ENCODE measurements at regions of chr11 and their contacts with region 1.

Region 1: GRCh38 chr11:62394825-62395538 is 23.9 kb upstream of the SCGB1A1 start:
- DNase-seq: peak; percentile 55 to 61
- ATAC-seq: peak; percentile 92 to 95
- H3K4me3 ChIP-seq: peak overlapping the region; percentile 34 to 50 (median 44)
- H3K27ac ChIP-seq: peak overlapping the region; percentile 32 to 67 (median 48)
- H3K4me1 ChIP-seq: peaks cover 20 to 28% of the 10 kb centered on the region in 2 donors
- H3K27me3 ChIP-seq: no peaks in the 10 kb centered on the region
- CTCF ChIP-seq: peak; percentile 43 to 73 (median 71)
- POLR2A ChIP-seq: no peak

Region 2: DNA sequence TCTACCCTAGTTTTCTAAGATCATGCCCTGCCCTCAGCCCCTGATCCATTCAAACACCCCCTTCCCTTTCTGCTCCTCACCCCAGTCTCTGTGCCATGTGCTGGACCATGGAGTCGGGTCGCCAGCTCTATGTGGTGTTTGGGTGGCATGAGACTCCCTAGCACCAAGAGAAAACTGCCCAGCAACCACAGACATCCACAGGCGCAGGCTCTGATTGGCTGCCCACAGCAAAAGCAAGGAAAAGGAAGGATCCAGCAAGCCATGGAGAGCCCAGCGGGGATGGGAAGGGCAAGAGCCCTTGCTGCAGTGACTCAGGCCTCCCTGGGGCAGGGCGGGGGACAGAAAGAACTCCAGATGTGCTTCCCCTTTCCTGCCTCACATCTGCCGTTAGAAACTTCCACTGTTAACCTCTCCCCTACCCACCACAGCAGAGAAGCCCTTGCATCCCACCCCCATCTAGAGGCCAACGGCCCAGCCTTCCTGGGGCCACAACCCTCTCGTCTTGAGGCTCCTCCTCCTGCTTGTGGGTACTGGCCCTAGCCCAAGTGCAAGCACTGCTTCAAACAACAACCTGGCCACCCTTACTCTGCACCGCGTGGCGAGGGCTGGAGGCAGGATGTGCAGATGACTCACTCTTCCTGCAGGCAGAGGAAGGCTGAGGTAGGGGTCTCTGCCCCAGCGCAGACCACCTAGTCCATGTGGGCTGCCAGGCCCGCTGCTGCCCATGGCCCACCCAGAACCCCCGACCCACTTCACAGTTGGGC is 161.3 kb after region 1 on chr11:
- in situ Hi-C with region 1: loop called in 1 of 4 experiments (anchors 10 kb)
- intact Hi-C with region 1: loop called (anchors 2 kb)
- DNase-seq: peak; percentile 89 to 94
- ATAC-seq: peak; percentile 40 to 42
- H3K4me3 ChIP-seq: peak overlapping the region in 2 of 4 donors; percentile 8 to 23
- H3K27ac ChIP-seq: peak overlapping the region; percentile 97 to 100 (median 100)
- H3K4me1 ChIP-seq: peaks cover 86 to 90% of the 10 kb centered on the region in 2 donors
- H3K27me3 ChIP-seq: no peaks in the 10 kb centered on the region
- CTCF ChIP-seq: no peak
- POLR2A ChIP-seq: peak in 1 of 2 donors; percentile 35

Region 3: GRCh38 chr11:62567018-62567633 is 172.1 kb after region 1 on chr11:
- in situ Hi-C with region 1: no loop called
- intact Hi-C with region 1: no loop called
- DNase-seq: no peak
- ATAC-seq: no peak
- H3K4me3 ChIP-seq: no peak overlapping the region
- H3K27ac ChIP-seq: peak overlapping the region; percentile 21 to 94 (median 75)
- H3K4me1 ChIP-seq: peaks cover 32 to 42% of the 10 kb centered on the region in 2 donors
- H3K27me3 ChIP-seq: no peaks in the 10 kb centered on the region
- CTCF ChIP-seq: no peak
- POLR2A ChIP-seq: no peak

Region 4: DNA sequence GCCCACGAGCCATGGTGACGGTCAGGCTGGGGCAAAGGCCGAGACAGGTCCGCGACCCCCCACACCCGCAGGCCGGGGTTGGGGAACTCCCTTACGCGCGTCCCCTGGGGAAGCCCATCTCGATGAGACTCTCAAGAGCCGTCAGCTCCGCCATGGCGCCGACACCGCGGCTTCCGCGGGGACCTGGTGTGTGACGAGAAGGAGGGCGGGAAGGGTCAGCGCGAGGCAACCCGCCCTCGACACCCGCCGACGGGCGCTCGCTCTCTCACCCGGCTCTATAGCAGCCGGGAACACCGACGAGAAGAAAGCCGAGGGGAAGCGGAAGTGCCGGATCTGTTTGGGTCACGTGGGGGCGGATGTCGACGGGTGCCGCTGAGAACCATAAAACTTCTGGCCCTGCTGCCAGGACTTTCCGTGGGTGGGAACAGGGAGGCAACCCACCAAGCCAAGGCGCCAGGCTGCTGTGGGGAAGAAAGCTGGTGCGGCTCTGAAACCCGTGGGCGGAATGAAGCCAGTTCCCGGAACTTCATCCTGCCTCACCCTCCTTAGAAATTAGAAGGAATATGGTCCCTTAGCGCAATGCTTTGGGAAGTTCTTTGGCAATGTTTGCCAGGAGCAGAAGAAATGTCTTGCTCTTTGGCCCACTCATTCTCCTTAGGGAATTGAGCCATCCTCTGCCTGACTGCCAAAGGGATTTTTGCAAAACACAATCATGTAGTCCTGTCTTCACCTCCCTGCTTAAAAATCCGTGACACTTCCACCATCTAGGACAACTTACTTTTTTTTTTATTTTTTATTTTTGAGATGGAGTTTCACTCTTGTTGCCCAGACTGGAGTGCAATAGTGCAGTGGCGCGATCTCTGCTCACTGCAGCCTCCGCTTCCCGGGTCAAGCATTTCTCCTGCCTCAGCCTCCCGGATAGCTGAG is 284.1 kb after region 1 on chr11 and contains the start of gene UBXN1:
- in situ Hi-C with region 1: loop called in 2 of 4 experiments (anchors 25 kb)
- intact Hi-C with region 1: no loop called
- DNase-seq: peak; percentile 87 to 92
- ATAC-seq: peak; percentile 83 to 85
- H3K4me3 ChIP-seq: peak within 1 kb of the TSS; percentile 91 to 98 (median 93)
- H3K27ac ChIP-seq: peak within 1 kb of the TSS; percentile 88 to 97 (median 94)
- H3K4me1 ChIP-seq: peaks cover 21 to 44% of the 10 kb centered on the region in 2 donors
- H3K27me3 ChIP-seq: no peaks in the 10 kb centered on the region
- CTCF ChIP-seq: no peak
- POLR2A ChIP-seq: peak; percentile 75 to 85
- total RNA-seq, gene UBXN1: 216 to 450 (median 265) TPM

Region 5: DNA sequence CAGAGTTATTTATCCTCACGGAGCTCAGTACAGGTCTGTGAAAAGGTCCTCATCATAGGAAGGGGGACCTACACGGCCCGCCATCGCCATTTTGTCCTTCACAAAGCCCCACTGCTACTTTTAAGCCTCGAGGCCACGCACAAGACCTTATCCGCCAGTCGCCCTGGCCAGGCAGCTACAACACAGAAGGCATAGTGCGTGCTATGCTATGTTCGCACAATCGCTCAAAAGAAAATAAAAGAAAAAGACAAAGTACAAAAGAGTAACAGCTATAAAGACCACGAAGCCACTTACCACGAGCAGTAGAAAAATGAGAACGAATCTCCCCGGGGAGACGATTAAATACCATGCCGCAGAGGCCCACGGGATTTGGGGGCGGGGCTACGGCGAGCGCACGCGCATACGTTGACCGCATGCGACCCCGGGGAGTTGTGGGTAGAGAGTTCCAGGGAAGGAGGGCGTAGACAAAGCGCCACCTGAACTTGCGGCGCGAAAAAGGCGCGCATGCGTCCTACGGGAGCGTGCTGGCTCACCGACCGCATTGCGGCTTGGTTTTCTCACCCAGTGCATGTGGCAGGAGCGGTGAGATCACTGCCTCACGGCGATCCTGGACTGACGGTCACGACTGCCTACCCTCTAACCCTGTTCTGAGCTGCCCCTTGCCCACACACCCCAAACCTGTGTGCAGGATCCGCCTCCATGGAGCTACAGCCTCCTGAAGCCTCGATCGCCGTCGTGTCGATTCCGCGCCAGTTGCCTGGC is 460.8 kb after region 1 on chr11:
- in situ Hi-C with region 1: loop called (anchors 25 kb)
- intact Hi-C with region 1: no loop called
- DNase-seq: peak; percentile 95 to 96
- ATAC-seq: peak; percentile 99
- H3K4me3 ChIP-seq: peak overlapping the region; percentile 70 to 90 (median 80)
- H3K27ac ChIP-seq: peak overlapping the region; percentile 84 to 88 (median 86)
- H3K4me1 ChIP-seq: peaks cover 20 to 21% of the 10 kb centered on the region in 2 donors
- H3K27me3 ChIP-seq: no peaks in the 10 kb centered on the region
- CTCF ChIP-seq: peak in 1 of 5 experiments; percentile 13
- POLR2A ChIP-seq: peak; percentile 93 to 96